ENCODE measurements at regions of chr12 and their contacts with region 1.

Region 1: DNA sequence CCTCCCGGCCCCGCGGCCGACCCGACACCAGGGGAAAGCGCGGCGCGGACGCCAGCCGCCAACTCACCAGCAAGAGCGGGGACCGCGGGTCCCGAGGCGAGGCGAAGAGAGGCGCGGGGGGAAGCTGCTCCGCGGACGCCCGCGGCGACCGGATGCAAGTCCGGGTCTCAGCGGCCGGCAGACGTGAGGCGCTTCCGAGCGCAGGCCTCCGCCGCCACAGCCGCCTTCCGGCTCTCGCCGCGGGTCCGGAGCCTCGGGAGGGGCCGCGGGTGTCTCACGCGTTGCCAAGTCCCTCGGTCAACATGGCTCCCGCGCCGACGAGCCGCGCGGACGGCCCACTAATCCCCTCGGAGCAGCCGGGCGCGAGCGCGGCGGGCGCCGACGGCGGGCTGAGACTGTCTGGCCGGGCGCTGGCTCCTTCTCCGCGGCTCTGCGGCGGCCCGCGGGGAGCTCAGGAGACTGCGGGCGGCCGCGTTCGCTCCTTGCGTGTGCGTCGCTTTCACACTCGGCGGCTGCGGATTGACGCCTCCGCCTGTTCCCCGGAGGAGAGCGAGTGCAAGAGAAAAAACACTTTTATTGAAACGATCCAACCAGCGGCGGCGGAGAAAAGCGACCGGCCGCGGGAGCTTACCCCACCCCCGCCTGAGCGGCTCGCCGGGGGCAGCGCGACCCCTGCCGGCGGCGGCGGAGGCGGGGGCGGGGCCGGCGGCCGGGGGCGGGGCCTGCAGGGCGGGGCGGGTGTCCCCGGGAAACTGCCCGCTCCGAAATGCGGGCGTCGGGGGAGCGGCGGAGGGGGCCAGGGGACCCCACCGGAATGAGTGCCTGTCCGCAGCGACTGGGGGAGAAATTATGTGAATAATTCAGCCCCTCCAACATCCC is at the start of gene CDK17:
- DNase-seq: peak; percentile 90
- H3K4me3 Mint-ChIP-seq: peak within 1 kb of the TSS; percentile 91
- H3K27ac Mint-ChIP-seq: peak within 1 kb of the TSS; percentile 99
- H3K4me1 Mint-ChIP-seq: peaks cover 55% of the 10 kb centered on the region
- H3K27me3 Mint-ChIP-seq: no peaks in the 10 kb centered on the region

Region 2: GRCh38 chr12:96208801-96209549 is 191.2 kb before region 1 on chr12:
- CTCF ChIA-PET with region 1: interaction called, 20 read pairs
- DNase-seq: no peak
- H3K4me3 Mint-ChIP-seq: peak overlapping the region; percentile 72
- H3K27ac Mint-ChIP-seq: peak overlapping the region; percentile 84
- H3K4me1 Mint-ChIP-seq: peaks cover 98% of the 10 kb centered on the region
- H3K27me3 Mint-ChIP-seq: no peaks in the 10 kb centered on the region

Region 3: GRCh38 chr12:96215919-96216273 is 184.3 kb before region 1 on chr12:
- CTCF ChIA-PET with region 1: interaction called, 25 read pairs
- DNase-seq: no peak
- H3K4me3 Mint-ChIP-seq: no peak overlapping the region
- H3K27ac Mint-ChIP-seq: peak overlapping the region; percentile 70
- H3K4me1 Mint-ChIP-seq: peaks cover 50% of the 10 kb centered on the region
- H3K27me3 Mint-ChIP-seq: no peaks in the 10 kb centered on the region

Region 4: GRCh38 chr12:96378319-96378718 is 21.8 kb before region 1 on chr12:
- CTCF ChIA-PET with region 1: interaction called, 16 read pairs
- DNase-seq: no peak
- H3K4me3 Mint-ChIP-seq: peak overlapping the region; percentile 82
- H3K27ac Mint-ChIP-seq: peak overlapping the region; percentile 100
- H3K4me1 Mint-ChIP-seq: peaks cover 79% of the 10 kb centered on the region
- H3K27me3 Mint-ChIP-seq: no peaks in the 10 kb centered on the region

Region 5: DNA sequence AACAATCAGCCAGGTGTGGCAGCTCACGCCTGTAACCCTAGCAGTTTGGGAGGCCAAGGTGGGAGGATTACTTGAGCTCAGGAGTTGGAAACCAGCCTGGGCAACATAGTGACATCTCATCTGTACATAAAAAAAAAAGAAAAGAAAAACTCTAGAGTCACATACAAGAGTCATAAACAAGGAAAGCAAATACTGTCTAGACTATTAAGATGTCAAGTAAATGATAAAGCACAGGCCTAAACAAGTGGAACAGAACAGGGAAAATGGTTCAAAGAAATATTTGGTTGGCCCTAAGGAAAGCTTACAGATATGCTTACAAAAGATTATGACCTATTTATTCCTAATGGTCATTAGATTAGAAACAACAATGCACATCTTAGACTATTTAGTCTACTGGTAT is 12.2 kb before region 1 on chr12:
- CTCF ChIA-PET with region 1: interaction called, 14 read pairs
- DNase-seq: no peak
- H3K4me3 Mint-ChIP-seq: no peak overlapping the region
- H3K27ac Mint-ChIP-seq: no peak overlapping the region
- H3K4me1 Mint-ChIP-seq: peaks cover 45% of the 10 kb centered on the region
- H3K27me3 Mint-ChIP-seq: no peaks in the 10 kb centered on the region

Region 6: DNA sequence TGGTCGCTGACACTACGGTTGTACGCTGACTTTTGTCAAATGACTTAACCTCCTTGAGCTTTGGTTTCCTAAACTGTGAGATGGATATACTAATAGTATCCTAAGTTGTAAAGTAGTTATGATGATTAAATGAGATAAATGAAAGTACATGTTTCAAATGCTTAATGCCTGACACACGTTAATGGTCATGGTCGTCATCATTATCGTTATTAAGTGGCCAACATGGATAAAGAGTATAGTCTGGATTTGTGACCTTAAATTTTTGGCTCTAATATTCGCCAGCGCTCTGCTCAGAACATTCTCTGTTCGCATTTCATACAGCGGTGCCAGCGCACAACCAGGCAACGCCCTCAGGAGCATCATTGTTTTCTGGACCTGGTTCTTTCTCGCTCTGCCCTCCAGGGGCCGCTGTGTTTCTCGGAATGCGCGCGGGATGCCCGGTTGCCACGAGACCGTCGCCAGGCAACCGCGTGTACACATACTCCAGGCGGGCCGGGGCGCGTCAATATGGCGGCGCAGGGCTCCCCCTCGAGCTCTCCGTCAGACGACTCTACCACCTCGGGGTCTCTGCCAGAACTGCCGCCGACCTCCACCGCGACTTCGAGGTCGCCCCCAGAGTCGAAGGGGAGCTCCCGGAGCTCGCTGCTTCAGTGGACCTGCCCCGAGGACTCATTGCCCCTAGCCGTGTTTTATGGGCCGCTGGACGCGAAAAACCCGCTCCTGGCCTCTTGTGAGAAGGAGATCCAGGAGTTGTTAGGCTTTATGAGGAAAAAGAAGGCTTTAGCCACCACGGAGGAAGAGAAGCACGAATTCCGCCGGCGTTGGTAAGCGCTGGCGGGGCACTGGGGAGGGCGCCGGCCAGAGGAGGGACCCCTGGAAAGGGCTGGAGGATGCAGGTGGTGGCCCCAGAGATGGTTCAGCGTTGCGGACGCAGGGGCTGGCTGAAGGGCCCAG is 89.2 kb after region 1 on chr12 and contains the start of gene CFAP54:
- CTCF ChIA-PET with region 1: interaction called, 25 read pairs
- DNase-seq: peak; percentile 96
- H3K4me3 Mint-ChIP-seq: peak within 1 kb of the TSS; percentile 79
- H3K27ac Mint-ChIP-seq: no peak within 1 kb of the TSS
- H3K4me1 Mint-ChIP-seq: peaks cover 30% of the 10 kb centered on the region
- H3K27me3 Mint-ChIP-seq: peaks cover 28% of the 10 kb centered on the region